T-cell (primary cell): ENCODE measurements at regions of chr1 and their contacts with region 1.

Region 1: GRCh38 chr1:92951141-92951582 is 10.1 kb downstream of the DIPK1A start:
- DNase-seq: peak in 16 of 35 experiments; percentile 4 to 62 (median 17)
- ATAC-seq: peak; percentile 82 to 95 (median 90)
- H3K4me3 ChIP-seq: no peak overlapping the region
- H3K4me3 Mint-ChIP-seq: no peak overlapping the region
- H3K27ac ChIP-seq: peak overlapping the region; percentile 7
- H3K27ac Mint-ChIP-seq: no peak overlapping the region
- H3K4me1 ChIP-seq: peaks cover 28 to 36% of the 10 kb centered on the region in 2 experiments
- H3K4me1 Mint-ChIP-seq: peaks cover 33 to 54% (median 52%) of the 10 kb centered on the region in 3 donors
- H3K27me3 ChIP-seq: no peaks in the 10 kb centered on the region
- H3K27me3 Mint-ChIP-seq: no peaks in the 10 kb centered on the region

Region 2: GRCh38 chr1:92808353-92808752 is 142.8 kb before region 1 on chr1:
- CTCF ChIA-PET with region 1: no interaction called
- POLR2A ChIA-PET with region 1: no interaction called
- DNase-seq: no peak
- ATAC-seq: no peak
- H3K4me3 ChIP-seq: no peak overlapping the region
- H3K4me3 Mint-ChIP-seq: no peak overlapping the region
- H3K27ac ChIP-seq: no peak overlapping the region
- H3K27ac Mint-ChIP-seq: no peak overlapping the region
- H3K4me1 ChIP-seq: no peaks in the 10 kb centered on the region
- H3K4me1 Mint-ChIP-seq: peaks cover 0 to 5% (median 2%) of the 10 kb centered on the region in 3 donors
- H3K27me3 ChIP-seq: peaks cover 0 to 3% of the 10 kb centered on the region in 2 experiments
- H3K27me3 Mint-ChIP-seq: peaks cover 4 to 6% of the 10 kb centered on the region in 2 donors

Region 3: DNA sequence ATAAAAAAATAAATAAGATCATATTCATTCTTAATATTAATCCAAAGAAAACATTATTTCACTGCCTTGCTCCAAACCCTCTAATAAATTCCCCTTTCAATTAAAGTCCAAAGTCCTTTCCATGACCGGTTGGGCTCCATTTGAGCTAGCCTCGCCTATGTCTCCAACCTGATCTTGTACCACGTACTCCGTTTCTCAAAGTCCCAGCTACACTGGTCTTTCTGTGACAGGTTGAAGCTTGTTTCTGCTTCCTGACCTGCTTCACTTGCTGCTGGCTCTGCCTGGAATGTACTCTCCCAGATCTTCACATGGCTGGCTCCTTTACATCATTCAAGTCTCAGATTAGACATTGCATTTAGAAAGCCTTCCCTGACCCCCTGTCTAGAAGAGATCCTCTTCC is 103.0 kb before region 1 on chr1:
- CTCF ChIA-PET with region 1: no interaction called
- POLR2A ChIA-PET with region 1: no interaction called
- DNase-seq: no peak
- ATAC-seq: no peak
- H3K4me3 ChIP-seq: no peak overlapping the region
- H3K4me3 Mint-ChIP-seq: no peak overlapping the region
- H3K27ac ChIP-seq: no peak overlapping the region
- H3K27ac Mint-ChIP-seq: peak overlapping the region; percentile 51 to 59
- H3K4me1 ChIP-seq: peaks cover 0 to 6% of the 10 kb centered on the region in 2 experiments
- H3K4me1 Mint-ChIP-seq: peaks cover 9 to 17% (median 10%) of the 10 kb centered on the region in 3 donors
- H3K27me3 ChIP-seq: no peaks in the 10 kb centered on the region
- H3K27me3 Mint-ChIP-seq: no peaks in the 10 kb centered on the region

Region 4: GRCh38 chr1:93021539-93022134 is 70.5 kb after region 1 on chr1:
- CTCF ChIA-PET with region 1: no interaction called
- POLR2A ChIA-PET with region 1: no interaction called
- DNase-seq: peak in 3 of 35 experiments; percentile 7 to 69 (median 24)
- ATAC-seq: peak; percentile 55 to 77 (median 68)
- H3K4me3 ChIP-seq: no peak overlapping the region
- H3K4me3 Mint-ChIP-seq: no peak overlapping the region
- H3K27ac ChIP-seq: no peak overlapping the region
- H3K27ac Mint-ChIP-seq: no peak overlapping the region
- H3K4me1 ChIP-seq: no peaks in the 10 kb centered on the region
- H3K4me1 Mint-ChIP-seq: peaks cover 0 to 5% (median 0%) of the 10 kb centered on the region in 3 donors
- H3K27me3 ChIP-seq: no peaks in the 10 kb centered on the region
- H3K27me3 Mint-ChIP-seq: peaks cover 0 to 10% of the 10 kb centered on the region in 2 donors

Region 5: DNA sequence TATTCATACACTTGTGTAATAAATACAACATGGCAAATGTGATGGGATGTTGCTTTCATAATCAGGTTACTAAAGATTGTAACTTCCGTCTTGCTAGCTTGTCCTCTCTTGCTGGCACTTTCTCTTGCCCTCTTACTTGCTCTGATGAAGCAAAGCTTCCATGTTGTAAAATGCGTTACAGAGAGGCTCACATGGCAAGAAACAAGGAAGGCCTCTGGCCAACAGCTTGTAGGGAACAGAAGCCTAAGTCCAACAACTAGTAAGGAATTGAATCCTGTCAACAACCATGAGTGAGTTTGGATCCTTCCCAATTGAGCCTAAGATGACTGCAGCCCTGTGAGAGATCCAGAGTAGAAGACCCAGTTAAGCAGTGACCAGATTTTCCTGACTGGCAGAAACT is 213.7 kb after region 1 on chr1:
- CTCF ChIA-PET with region 1: no interaction called
- POLR2A ChIA-PET with region 1: interaction called in 1 of 2 experiments, 13 read pairs
- DNase-seq: no peak
- ATAC-seq: no peak
- H3K4me3 ChIP-seq: no peak overlapping the region
- H3K4me3 Mint-ChIP-seq: no peak overlapping the region
- H3K27ac ChIP-seq: no peak overlapping the region
- H3K27ac Mint-ChIP-seq: peak overlapping the region; percentile 3 to 65
- H3K4me1 ChIP-seq: no peaks in the 10 kb centered on the region
- H3K4me1 Mint-ChIP-seq: peaks cover 53 to 62% (median 59%) of the 10 kb centered on the region in 3 donors
- H3K27me3 ChIP-seq: no peaks in the 10 kb centered on the region
- H3K27me3 Mint-ChIP-seq: no peaks in the 10 kb centered on the region